ENCODE measurements at regions of chr7 and their contacts with region 1.

Region 1: GRCh38 chr7:121994625-121995410 is 121.9 kb downstream of the PTPRZ1 start:
- DNase-seq: peak; percentile 69
- H3K4me3 ChIP-seq: no peak overlapping the region
- H3K27ac ChIP-seq: no peak overlapping the region
- H3K4me1 ChIP-seq: peaks cover 2% of the 10 kb centered on the region
- H3K27me3 ChIP-seq: peaks cover 3 to 5% of the 10 kb centered on the region in 2 experiments
- CTCF ChIP-seq: peak; percentile 45 to 59
- POLR2A ChIP-seq: no peak

Region 2: GRCh38 chr7:121235201-121235600 is 759.6 kb before region 1 on chr7:
- CTCF ChIA-PET with region 1: interaction called, 3 read pairs
- POLR2A ChIA-PET with region 1: no interaction called
- dilution Hi-C with region 1: no loop called
- intact Hi-C with region 1: loop called (anchors 10 kb)
- DNase-seq: no peak
- H3K4me3 ChIP-seq: no peak overlapping the region
- H3K27ac ChIP-seq: no peak overlapping the region
- H3K4me1 ChIP-seq: no peaks in the 10 kb centered on the region
- H3K27me3 ChIP-seq: no peaks in the 10 kb centered on the region
- CTCF ChIP-seq: no peak
- POLR2A ChIP-seq: no peak

Region 3: GRCh38 chr7:121547544-121548092 is 447.2 kb before region 1 on chr7:
- CTCF ChIA-PET with region 1: interaction called, 21 read pairs
- POLR2A ChIA-PET with region 1: no interaction called
- dilution Hi-C with region 1: no loop called
- intact Hi-C with region 1: loop called (anchors 1 kb)
- DNase-seq: peak; percentile 67
- H3K4me3 ChIP-seq: no peak overlapping the region
- H3K27ac ChIP-seq: no peak overlapping the region
- H3K4me1 ChIP-seq: peaks cover 32% of the 10 kb centered on the region
- H3K27me3 ChIP-seq: no peaks in the 10 kb centered on the region
- CTCF ChIP-seq: peak; percentile 43 to 50
- POLR2A ChIP-seq: no peak

Region 4: DNA sequence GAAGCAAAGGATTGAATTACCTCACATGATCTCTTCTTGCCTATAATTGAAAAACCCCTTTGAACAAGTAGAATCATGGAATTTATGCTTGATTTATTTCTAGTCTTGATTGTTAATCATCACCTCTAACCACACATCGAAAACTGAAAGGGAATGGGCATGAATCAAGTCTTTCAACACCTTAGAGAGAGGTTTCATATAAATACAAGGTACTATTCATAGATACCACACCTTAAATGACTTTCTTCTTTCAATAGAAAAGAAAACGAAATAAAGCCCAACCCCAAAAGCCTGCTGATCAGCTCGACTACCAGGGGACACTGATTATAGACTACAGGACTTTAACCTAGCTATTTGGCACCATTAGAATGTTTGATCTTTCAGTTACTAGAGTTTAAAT is 250.5 kb before region 1 on chr7:
- CTCF ChIA-PET with region 1: interaction called, 53 read pairs
- POLR2A ChIA-PET with region 1: no interaction called
- dilution Hi-C with region 1: no loop called
- intact Hi-C with region 1: no loop called
- DNase-seq: no peak
- H3K4me3 ChIP-seq: no peak overlapping the region
- H3K27ac ChIP-seq: no peak overlapping the region
- H3K4me1 ChIP-seq: no peaks in the 10 kb centered on the region
- H3K27me3 ChIP-seq: no peaks in the 10 kb centered on the region
- CTCF ChIP-seq: no peak
- POLR2A ChIP-seq: no peak

Region 5: DNA sequence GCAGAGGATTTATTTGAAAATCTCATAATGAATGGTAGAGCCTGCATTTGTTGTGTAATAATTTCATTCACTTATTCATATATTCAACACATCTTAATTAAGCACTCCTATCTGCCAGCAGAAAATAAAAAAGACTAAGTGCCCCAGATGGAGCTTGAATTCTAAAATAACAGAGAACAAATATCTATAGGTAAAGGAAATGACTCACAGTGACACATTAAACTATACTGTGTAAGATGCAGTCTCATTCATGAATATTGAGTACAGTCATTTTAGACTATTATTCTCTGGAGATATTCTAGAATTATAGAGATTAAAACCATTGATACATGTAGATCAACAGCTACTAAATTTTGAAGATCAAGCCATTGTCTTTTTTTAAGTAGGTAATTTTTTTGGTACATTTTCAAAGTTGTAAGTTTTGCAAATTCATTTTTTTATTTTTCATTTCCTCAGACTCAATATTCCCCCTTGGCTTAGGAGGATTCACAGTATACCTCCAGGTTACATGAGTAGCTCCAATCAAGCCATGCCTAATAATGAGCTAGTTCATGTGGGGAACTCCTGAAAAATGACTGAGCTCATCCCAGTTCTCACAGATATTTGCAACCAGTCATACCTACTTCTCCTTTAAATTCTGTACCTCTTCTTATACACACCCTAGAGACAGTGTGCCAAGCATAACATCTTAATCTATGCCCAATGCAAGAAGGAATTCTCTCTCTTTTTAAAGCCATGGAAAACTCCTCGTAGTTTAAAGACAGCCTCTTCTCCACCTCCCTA is 49.6 kb before region 1 on chr7:
- CTCF ChIA-PET with region 1: interaction called, 11 read pairs
- POLR2A ChIA-PET with region 1: no interaction called
- dilution Hi-C with region 1: no loop called
- intact Hi-C with region 1: no loop called
- DNase-seq: no peak
- H3K4me3 ChIP-seq: no peak overlapping the region
- H3K27ac ChIP-seq: no peak overlapping the region
- H3K4me1 ChIP-seq: peaks cover 5% of the 10 kb centered on the region
- H3K27me3 ChIP-seq: no peaks in the 10 kb centered on the region
- CTCF ChIP-seq: no peak
- POLR2A ChIP-seq: no peak

Region 6: GRCh38 chr7:122006687-122007086 is 11.9 kb after region 1 on chr7:
- CTCF ChIA-PET with region 1: interaction called, 31 read pairs
- POLR2A ChIA-PET with region 1: no interaction called
- dilution Hi-C with region 1: no loop called
- intact Hi-C with region 1: no loop called
- DNase-seq: no peak
- H3K4me3 ChIP-seq: no peak overlapping the region
- H3K27ac ChIP-seq: no peak overlapping the region
- H3K4me1 ChIP-seq: no peaks in the 10 kb centered on the region
- H3K27me3 ChIP-seq: no peaks in the 10 kb centered on the region
- CTCF ChIP-seq: no peak
- POLR2A ChIP-seq: no peak

Measured in endothelial cell of umbilical vein (primary cell).